ENCODE measurements at regions of chr7 and their contacts with region 1.

Region 1: GRCh38 chr7:77415823-77416622 is at the start of gene GSAP:
- DNase-seq: peak; percentile 38 to 60 (median 52)
- H3K4me3 ChIP-seq: peak within 1 kb of the TSS; percentile 8 to 56
- H3K4me3 Mint-ChIP-seq: peak within 1 kb of the TSS; percentile 78 to 91 (median 84)
- H3K27ac ChIP-seq: peak within 1 kb of the TSS; percentile 58
- H3K27ac Mint-ChIP-seq: peak within 1 kb of the TSS; percentile 72 to 84 (median 77)
- H3K4me1 ChIP-seq: peaks cover 24% of the 10 kb centered on the region
- H3K4me1 Mint-ChIP-seq: peaks cover 17 to 49% (median 30%) of the 10 kb centered on the region in 4 donors
- H3K27me3 ChIP-seq: no peaks in the 10 kb centered on the region
- H3K27me3 Mint-ChIP-seq: peaks cover 0 to under 1% of the 10 kb centered on the region in 2 donors
- total RNA-seq, gene GSAP: 20.5 to 22.0 TPM

Region 2: GRCh38 chr7:77199013-77199966 is 216.7 kb before region 1 on chr7 and contains the start of gene FGL2:
- CTCF ChIA-PET with region 1: no interaction called
- POLR2A ChIA-PET with region 1: no interaction called
- intact Hi-C with region 1: loop called (anchors 5 kb)
- DNase-seq: peak; percentile 37 to 49 (median 43)
- H3K4me3 ChIP-seq: peak within 1 kb of the TSS; percentile 51 to 67
- H3K4me3 Mint-ChIP-seq: peak within 1 kb of the TSS; percentile 82 to 93 (median 88)
- H3K27ac ChIP-seq: peak within 1 kb of the TSS; percentile 56
- H3K27ac Mint-ChIP-seq: peak within 1 kb of the TSS; percentile 60 to 96 (median 91)
- H3K4me1 ChIP-seq: peaks cover 52% of the 10 kb centered on the region
- H3K4me1 Mint-ChIP-seq: peaks cover 27 to 42% (median 34%) of the 10 kb centered on the region in 4 donors
- H3K27me3 ChIP-seq: no peaks in the 10 kb centered on the region
- H3K27me3 Mint-ChIP-seq: no peaks in the 10 kb centered on the region
- total RNA-seq, gene FGL2: 2.9 to 4.5 TPM

Region 3: GRCh38 chr7:77428041-77428473 is 12.0 kb after region 1 on chr7:
- CTCF ChIA-PET with region 1: interaction called, 5 read pairs
- POLR2A ChIA-PET with region 1: interaction called, 10 read pairs
- intact Hi-C with region 1: no loop called
- DNase-seq: no peak
- H3K4me3 ChIP-seq: no peak overlapping the region
- H3K4me3 Mint-ChIP-seq: peak overlapping the region in 7 of 8 donors; percentile 0 to 75 (median 59)
- H3K27ac ChIP-seq: no peak overlapping the region
- H3K27ac Mint-ChIP-seq: peak overlapping the region; percentile 28 to 86 (median 66)
- H3K4me1 ChIP-seq: peaks cover 21% of the 10 kb centered on the region
- H3K4me1 Mint-ChIP-seq: peaks cover 9 to 22% (median 19%) of the 10 kb centered on the region in 4 donors
- H3K27me3 ChIP-seq: no peaks in the 10 kb centered on the region
- H3K27me3 Mint-ChIP-seq: peaks cover 0 to 3% of the 10 kb centered on the region in 2 donors

Region 4: GRCh38 chr7:77536413-77537135 is 120.6 kb after region 1 on chr7:
- CTCF ChIA-PET with region 1: no interaction called
- POLR2A ChIA-PET with region 1: interaction called, 14 read pairs
- intact Hi-C with region 1: loop called (anchors 2 kb)
- DNase-seq: peak; percentile 93 to 96 (median 94)
- H3K4me3 ChIP-seq: peak overlapping the region; percentile 76 to 95
- H3K4me3 Mint-ChIP-seq: peak overlapping the region; percentile 93 to 98 (median 98)
- H3K27ac ChIP-seq: peak overlapping the region; percentile 77
- H3K27ac Mint-ChIP-seq: peak overlapping the region; percentile 94 to 98 (median 96)
- H3K4me1 ChIP-seq: peaks cover 7% of the 10 kb centered on the region
- H3K4me1 Mint-ChIP-seq: peaks cover 6 to 28% (median 16%) of the 10 kb centered on the region in 4 donors
- H3K27me3 ChIP-seq: no peaks in the 10 kb centered on the region
- H3K27me3 Mint-ChIP-seq: no peaks in the 10 kb centered on the region

Measured in CD4-positive, alpha-beta memory T cell (primary cell).